ENCODE measurements at regions of chr11 and their contacts with region 1.

Region 1: GRCh38 chr11:10398525-10398924 is 56.5 kb upstream of the AMPD3 start:
- DNase-seq: peak in 1 of 4 donors; percentile 81
- ATAC-seq: peak; percentile 86
- H3K4me3 ChIP-seq: no peak overlapping the region
- H3K27ac ChIP-seq: no peak overlapping the region
- H3K4me1 ChIP-seq: peaks cover 0 to 32% of the 10 kb centered on the region in 2 donors
- H3K27me3 ChIP-seq: no peaks in the 10 kb centered on the region
- CTCF ChIP-seq: no peak

Region 2: DNA sequence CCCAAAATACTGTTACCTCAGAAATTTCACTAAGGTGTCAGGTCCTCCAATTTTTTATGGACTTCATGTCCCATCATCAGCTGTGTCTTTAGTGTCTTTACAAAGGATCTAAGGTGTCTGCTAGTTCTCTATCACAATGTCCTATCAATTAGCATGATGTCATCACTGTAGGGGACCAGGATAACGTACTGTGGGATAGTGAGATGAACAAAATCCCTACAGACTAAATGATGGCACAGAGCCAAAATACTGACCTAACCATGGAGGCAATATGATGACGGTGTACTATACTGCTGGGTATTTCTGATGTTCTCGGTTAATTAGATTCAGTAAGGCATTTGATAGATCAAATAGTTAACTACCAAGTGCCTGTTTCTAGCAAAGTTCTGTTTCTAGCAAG is 187.1 kb before region 1 on chr11:
- intact Hi-C with region 1: no loop called
- DNase-seq: no peak
- ATAC-seq: no peak
- H3K4me3 ChIP-seq: no peak overlapping the region
- H3K27ac ChIP-seq: no peak overlapping the region
- H3K4me1 ChIP-seq: peaks cover 0 to 12% of the 10 kb centered on the region in 2 donors
- H3K27me3 ChIP-seq: no peaks in the 10 kb centered on the region
- CTCF ChIP-seq: no peak

Region 3: GRCh38 chr11:10730151-10730550 is 331.6 kb after region 1 on chr11:
- intact Hi-C with region 1: loop called in 1 of 2 experiments (anchors 5 kb)
- DNase-seq: no peak
- ATAC-seq: no peak
- H3K4me3 ChIP-seq: no peak overlapping the region
- H3K27ac ChIP-seq: no peak overlapping the region
- H3K4me1 ChIP-seq: peaks cover 10 to 25% of the 10 kb centered on the region in 2 donors
- H3K27me3 ChIP-seq: peaks cover 0 to 12% of the 10 kb centered on the region in 2 donors
- CTCF ChIP-seq: no peak

Measured in left lung (tissue), 14 donors.